Adrenal gland (tissue), 19 donors: ENCODE measurements at regions of chr1 and their contacts with region 1.

Region 1: GRCh38 chr1:7646981-7647901 is 123.9 kb upstream of the VAMP3 start:
- DNase-seq: peak; percentile 59 to 85 (median 74)
- H3K4me3 ChIP-seq: no peak overlapping the region
- H3K27ac ChIP-seq: no peak overlapping the region
- H3K4me1 ChIP-seq: no peaks in the 10 kb centered on the region
- H3K27me3 ChIP-seq: no peaks in the 10 kb centered on the region
- CTCF ChIP-seq: peak; percentile 70 to 98 (median 88)
- POLR2A ChIP-seq: no peak

Region 2: DNA sequence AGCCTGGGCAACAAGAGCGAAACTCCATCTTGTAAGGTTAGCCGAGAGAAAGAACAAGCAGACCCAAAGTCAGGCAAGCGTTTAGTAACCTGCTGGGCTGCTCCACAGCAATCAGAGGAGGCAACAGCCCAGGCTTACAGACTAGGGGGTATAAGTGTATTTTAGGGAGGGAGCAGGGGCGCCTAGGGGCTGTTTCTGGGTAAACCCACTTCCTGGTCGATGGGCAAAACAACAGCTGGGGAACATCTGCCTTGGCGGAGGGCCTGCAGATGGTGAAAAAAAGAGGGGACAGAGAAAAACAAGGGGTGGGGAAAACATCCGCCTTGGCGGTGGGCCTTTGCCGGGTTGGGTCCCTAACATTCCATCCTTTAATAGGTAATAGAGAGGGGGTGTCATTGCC is 1087.0 kb before region 1 on chr1:
- intact Hi-C with region 1: loop called in 1 of 2 experiments (anchors 10 kb)
- DNase-seq: no peak
- H3K4me3 ChIP-seq: no peak overlapping the region
- H3K27ac ChIP-seq: no peak overlapping the region
- H3K4me1 ChIP-seq: peaks cover 0 to 2% of the 10 kb centered on the region in 2 donors
- H3K27me3 ChIP-seq: no peaks in the 10 kb centered on the region
- CTCF ChIP-seq: no peak
- POLR2A ChIP-seq: no peak

Region 3: GRCh38 chr1:7042322-7043190 is 604.7 kb before region 1 on chr1:
- intact Hi-C with region 1: loop called in 1 of 2 experiments (anchors 10 kb)
- DNase-seq: no peak
- H3K4me3 ChIP-seq: no peak overlapping the region
- H3K27ac ChIP-seq: no peak overlapping the region
- H3K4me1 ChIP-seq: no peaks in the 10 kb centered on the region
- H3K27me3 ChIP-seq: no peaks in the 10 kb centered on the region
- CTCF ChIP-seq: peak; percentile 39 to 63 (median 50)
- POLR2A ChIP-seq: no peak

Region 4: DNA sequence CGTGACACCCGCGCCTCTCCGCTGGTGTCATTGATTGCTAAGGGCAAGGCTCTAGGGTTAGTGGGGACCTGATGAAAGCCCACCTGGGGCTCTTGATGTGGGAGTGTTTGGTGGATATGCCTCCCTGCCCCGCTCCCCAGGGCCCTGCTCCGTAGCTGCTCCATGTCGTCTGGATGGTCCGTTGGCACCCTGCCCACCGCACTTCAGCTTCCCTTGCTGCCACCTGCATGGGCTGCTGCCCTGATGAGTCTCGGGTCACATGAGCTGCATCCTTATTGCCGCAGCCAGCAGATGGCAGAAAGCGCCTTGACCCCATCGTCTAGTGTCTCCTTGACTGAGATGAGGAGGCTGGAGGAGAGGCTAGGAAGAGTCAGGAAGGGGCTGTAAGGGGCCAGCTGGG is 422.6 kb before region 1 on chr1:
- intact Hi-C with region 1: loop called (anchors 10 kb)
- DNase-seq: peak in 2 of 7 donors; percentile 24 to 52
- H3K4me3 ChIP-seq: no peak overlapping the region
- H3K27ac ChIP-seq: no peak overlapping the region
- H3K4me1 ChIP-seq: no peaks in the 10 kb centered on the region
- H3K27me3 ChIP-seq: no peaks in the 10 kb centered on the region
- CTCF ChIP-seq: peak in 1 of 6 experiments; percentile 15
- POLR2A ChIP-seq: no peak

Region 5: GRCh38 chr1:7454052-7454815 is 193.0 kb before region 1 on chr1:
- intact Hi-C with region 1: loop called (anchors 5 kb)
- DNase-seq: peak in 2 of 7 donors; percentile 38 to 41
- H3K4me3 ChIP-seq: no peak overlapping the region
- H3K27ac ChIP-seq: no peak overlapping the region
- H3K4me1 ChIP-seq: peaks cover 0 to 5% of the 10 kb centered on the region in 2 donors
- H3K27me3 ChIP-seq: no peaks in the 10 kb centered on the region
- CTCF ChIP-seq: peak; percentile 17 to 55 (median 42)
- POLR2A ChIP-seq: no peak

Region 6: GRCh38 chr1:7690496-7691182 is 43.4 kb after region 1 on chr1:
- intact Hi-C with region 1: no loop called
- DNase-seq: no peak
- H3K4me3 ChIP-seq: no peak overlapping the region
- H3K27ac ChIP-seq: no peak overlapping the region
- H3K4me1 ChIP-seq: no peaks in the 10 kb centered on the region
- H3K27me3 ChIP-seq: no peaks in the 10 kb centered on the region
- CTCF ChIP-seq: no peak
- POLR2A ChIP-seq: no peak

Region 7: GRCh38 chr1:7770997-7771822 is 124.0 kb after region 1 on chr1 and contains the start of gene VAMP3:
- intact Hi-C with region 1: no loop called
- DNase-seq: peak; percentile 88 to 94 (median 90)
- H3K4me3 ChIP-seq: peak within 1 kb of the TSS; percentile 50 to 100 (median 90)
- H3K27ac ChIP-seq: peak within 1 kb of the TSS; percentile 73 to 98 (median 94)
- H3K4me1 ChIP-seq: peaks cover 7 to 14% of the 10 kb centered on the region in 2 donors
- H3K27me3 ChIP-seq: no peaks in the 10 kb centered on the region
- CTCF ChIP-seq: no peak
- POLR2A ChIP-seq: peak; percentile 66 to 80
- total RNA-seq, gene VAMP3: 89.3 to 151 (median 116) TPM

Region 8: GRCh38 chr1:8026153-8026975 is 379.1 kb after region 1 on chr1 and contains the start of gene ERRFI1:
- intact Hi-C with region 1: no loop called
- DNase-seq: peak; percentile 93 to 97 (median 94)
- H3K4me3 ChIP-seq: peak within 1 kb of the TSS; percentile 31 to 97 (median 56)
- H3K27ac ChIP-seq: peak within 1 kb of the TSS; percentile 16 to 95 (median 84)
- H3K4me1 ChIP-seq: peaks cover 23 to 48% of the 10 kb centered on the region in 2 donors
- H3K27me3 ChIP-seq: no peaks in the 10 kb centered on the region
- CTCF ChIP-seq: peak in 1 of 6 experiments; percentile 15
- POLR2A ChIP-seq: peak; percentile 99 to 100
- total RNA-seq, gene ERRFI1: 16.0 to 71.5 (median 27.4) TPM